ENCODE measurements at regions of chr6 and their contacts with region 1.

Region 1: GRCh38 chr6:26087284-26088115 is at the start of gene HFE:
- DNase-seq: no peak
- H3K4me3 ChIP-seq: no peak within 1 kb of the TSS
- H3K27ac ChIP-seq: no peak within 1 kb of the TSS
- H3K4me1 ChIP-seq: no peaks in the 10 kb centered on the region; a peak in 1 of 4 replicates
- H3K27me3 ChIP-seq: no peaks in the 10 kb centered on the region
- CTCF ChIP-seq: no peak
- EP300 ChIP-seq: no peak
- RAD21 ChIP-seq: no peak
- polyA plus RNA-seq, gene HFE: not detected in 2 replicates

Region 2: DNA sequence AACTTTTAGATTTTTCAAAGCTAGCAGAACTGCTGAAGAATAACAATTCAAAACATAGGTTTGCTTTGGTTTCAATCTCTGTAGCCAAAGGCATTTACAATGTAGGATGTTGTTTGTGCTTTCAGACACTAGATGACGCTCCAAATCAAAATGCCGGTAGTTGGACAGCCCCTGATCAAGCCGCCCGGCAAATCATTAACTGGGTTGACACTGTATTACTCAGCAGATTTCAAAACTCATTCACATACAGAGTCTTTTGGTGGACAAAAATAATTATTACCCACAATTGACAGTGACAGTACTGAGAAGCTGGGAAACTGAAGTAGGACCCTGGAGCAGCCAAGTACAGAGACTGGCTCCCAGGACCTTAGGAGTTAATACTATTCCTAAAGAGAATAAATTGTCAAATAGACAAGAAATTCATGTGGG is 21.5 kb before region 1 on chr6:
- CTCF ChIA-PET with region 1: interaction called, 660 read pairs
- POLR2A ChIA-PET with region 1: no interaction called
- DNase-seq: peak; percentile 66
- H3K4me3 ChIP-seq: peak overlapping the region in 1 of 2 experiments; percentile 23; a peak in 1 of 4 replicates
- H3K27ac ChIP-seq: no peak overlapping the region
- H3K4me1 ChIP-seq: no peaks in the 10 kb centered on the region
- H3K27me3 ChIP-seq: no peaks in the 10 kb centered on the region
- CTCF ChIP-seq: peak; percentile 91
- EP300 ChIP-seq: no peak
- RAD21 ChIP-seq: peak; percentile 86